Colonic mucosa (tissue), 4 donors: ENCODE measurements at regions of chrX and their contacts with region 1.

Region 1: DNA sequence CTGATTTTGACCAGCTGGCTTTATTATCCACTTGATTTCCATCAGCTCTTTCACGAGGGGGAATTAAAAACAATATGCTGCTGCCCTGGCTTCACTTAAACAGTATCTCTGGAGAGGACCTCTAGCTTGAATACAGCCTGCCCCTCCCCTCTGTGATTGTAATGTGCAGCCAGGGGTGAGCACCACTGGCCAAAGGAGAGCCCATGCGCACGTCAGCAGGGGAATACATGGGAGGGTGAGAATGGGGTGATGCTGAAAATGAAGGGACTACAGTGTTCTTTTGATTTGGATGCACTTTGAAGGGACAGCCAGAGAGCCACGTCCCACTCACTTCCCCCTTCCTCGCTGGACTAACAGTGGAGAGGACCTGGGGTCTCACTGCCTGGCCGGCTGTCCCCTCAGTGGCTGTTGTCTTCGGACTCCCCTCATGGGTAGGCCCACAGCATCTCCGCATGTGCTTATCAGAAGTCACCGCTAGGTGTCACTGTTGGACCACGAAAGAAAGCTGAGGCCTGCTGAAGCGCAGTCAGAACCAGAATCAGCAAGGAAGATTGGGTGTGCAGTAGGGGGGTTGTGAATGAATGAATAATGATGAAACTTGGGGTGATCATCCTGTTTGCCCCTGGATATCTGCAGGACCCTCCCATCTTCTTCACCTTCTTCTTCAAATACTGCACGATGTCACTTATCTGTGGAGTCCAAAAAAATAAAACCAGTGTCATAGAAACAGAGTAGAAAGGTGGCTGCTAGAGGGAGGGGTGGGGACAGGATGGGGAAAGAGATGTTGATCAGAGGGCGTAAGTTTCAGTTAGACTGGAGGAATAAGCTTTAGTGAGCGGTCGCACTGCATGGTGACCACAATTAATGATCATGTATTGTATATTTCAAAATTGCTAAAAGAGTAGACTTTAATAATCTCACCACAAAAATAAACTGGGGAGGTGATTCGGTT is 32.8 kb downstream of the CLCN4 start:
- DNase-seq: peak; percentile 78
- H3K4me3 ChIP-seq: no peak overlapping the region
- H3K27ac ChIP-seq: no peak overlapping the region
- H3K4me1 ChIP-seq: no peaks in the 10 kb centered on the region
- H3K27me3 ChIP-seq: no peaks in the 10 kb centered on the region
- CTCF ChIP-seq: peak; percentile 80

Region 2: GRCh38 chrX:9859711-9860555 is 329.7 kb before region 1 on chrX:
- intact Hi-C with region 1: no loop called
- DNase-seq: no peak
- H3K4me3 ChIP-seq: no peak overlapping the region
- H3K27ac ChIP-seq: no peak overlapping the region
- H3K4me1 ChIP-seq: no peaks in the 10 kb centered on the region
- H3K27me3 ChIP-seq: no peaks in the 10 kb centered on the region
- CTCF ChIP-seq: no peak

Region 3: DNA sequence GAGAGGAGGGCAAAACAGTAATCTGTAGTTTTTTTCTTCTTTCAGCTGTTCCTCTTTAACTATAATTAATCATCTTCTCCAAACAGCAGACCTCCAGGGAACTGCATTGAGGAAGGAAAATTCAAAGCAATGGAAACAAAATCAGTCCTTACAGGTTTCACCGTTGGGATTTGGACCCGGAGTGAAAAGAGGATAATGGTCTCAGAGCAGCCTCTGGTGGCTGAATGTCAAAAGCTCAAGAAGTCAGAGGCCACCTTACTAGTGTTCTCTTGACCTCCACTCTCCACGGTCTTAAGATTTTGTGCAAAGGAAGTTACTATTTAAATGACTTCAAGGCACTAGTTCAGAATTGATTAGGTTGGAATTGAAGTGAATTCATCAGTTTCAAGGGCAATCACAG is 446.7 kb after region 1 on chrX:
- intact Hi-C with region 1: loop called (anchors 2 kb)
- DNase-seq: peak; percentile 25
- H3K4me3 ChIP-seq: no peak overlapping the region
- H3K27ac ChIP-seq: no peak overlapping the region
- H3K4me1 ChIP-seq: no peaks in the 10 kb centered on the region
- H3K27me3 ChIP-seq: no peaks in the 10 kb centered on the region
- CTCF ChIP-seq: peak; percentile 22

Region 4: GRCh38 chrX:11137543-11138139 is 948.0 kb after region 1 on chrX:
- intact Hi-C with region 1: loop called (anchors 5 kb)
- DNase-seq: no peak
- H3K4me3 ChIP-seq: no peak overlapping the region
- H3K27ac ChIP-seq: no peak overlapping the region
- H3K4me1 ChIP-seq: no peaks in the 10 kb centered on the region
- H3K27me3 ChIP-seq: no peaks in the 10 kb centered on the region
- CTCF ChIP-seq: peak; percentile 79